Colonic mucosa (tissue), 4 donors: ENCODE measurements at regions of chr2 and their contacts with region 1.

Region 1: GRCh38 chr2:38508311-38509039 is 94.3 kb downstream of the HNRNPLL start:
- DNase-seq: peak; percentile 92
- H3K4me3 ChIP-seq: no peak overlapping the region
- H3K27ac ChIP-seq: no peak overlapping the region
- H3K4me1 ChIP-seq: peaks cover 4% of the 10 kb centered on the region
- H3K27me3 ChIP-seq: no peaks in the 10 kb centered on the region
- CTCF ChIP-seq: peak; percentile 60

Region 2: GRCh38 chr2:38315707-38316333 is 192.7 kb before region 1 on chr2:
- intact Hi-C with region 1: loop called (anchors 5 kb)
- DNase-seq: no peak
- H3K4me3 ChIP-seq: no peak overlapping the region
- H3K27ac ChIP-seq: no peak overlapping the region
- H3K4me1 ChIP-seq: no peaks in the 10 kb centered on the region
- H3K27me3 ChIP-seq: no peaks in the 10 kb centered on the region
- CTCF ChIP-seq: peak; percentile 69

Region 3: DNA sequence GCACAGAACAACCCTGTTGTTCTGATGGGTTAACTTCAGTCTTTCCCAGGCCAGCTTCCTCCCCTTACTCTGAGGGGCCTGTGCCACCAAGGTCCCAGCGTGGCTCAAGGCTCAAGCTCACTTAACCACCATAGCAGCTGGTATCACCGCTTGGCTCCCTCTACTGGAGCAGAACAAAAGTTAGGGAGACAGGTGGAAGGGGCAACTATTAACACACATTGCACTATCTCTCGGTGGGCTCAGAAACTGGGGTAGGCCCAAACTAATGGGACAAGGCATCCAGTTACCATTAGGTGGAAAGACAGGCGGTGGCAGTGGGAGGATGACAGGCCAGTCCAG is 42.7 kb before region 1 on chr2:
- intact Hi-C with region 1: loop called (anchors 5 kb)
- DNase-seq: peak; percentile 41
- H3K4me3 ChIP-seq: no peak overlapping the region
- H3K27ac ChIP-seq: no peak overlapping the region
- H3K4me1 ChIP-seq: no peaks in the 10 kb centered on the region
- H3K27me3 ChIP-seq: no peaks in the 10 kb centered on the region
- CTCF ChIP-seq: no peak